ENCODE measurements at regions of chr7 and their contacts with region 1.

Region 1: GRCh38 chr7:142811154-142811737 is 40.5 kb downstream of the PRSS2 start:
- DNase-seq: peak; percentile 59
- H3K4me3 ChIP-seq: no peak overlapping the region; a peak in 1 of 4 replicates
- H3K27ac ChIP-seq: no peak overlapping the region
- H3K4me1 ChIP-seq: peaks cover 27 to 33% of the 10 kb centered on the region in 2 experiments
- H3K27me3 ChIP-seq: peaks cover 10% of the 10 kb centered on the region; the same call in 1 of the 2 replicates
- CTCF ChIP-seq: peak; percentile 89
- EP300 ChIP-seq: no peak
- RAD21 ChIP-seq: peak; percentile 76

Region 2: GRCh38 chr7:142345811-142346210 is 465.4 kb before region 1 on chr7:
- CTCF ChIA-PET with region 1: no interaction called
- POLR2A ChIA-PET with region 1: no interaction called
- DNase-seq: no peak
- H3K4me3 ChIP-seq: no peak overlapping the region
- H3K27ac ChIP-seq: no peak overlapping the region
- H3K4me1 ChIP-seq: no peaks in the 10 kb centered on the region
- H3K27me3 ChIP-seq: peaks cover 65% of the 10 kb centered on the region
- CTCF ChIP-seq: no peak
- EP300 ChIP-seq: no peak
- RAD21 ChIP-seq: no peak

Region 3: GRCh38 chr7:142496545-142497041 is 314.7 kb before region 1 on chr7:
- CTCF ChIA-PET with region 1: interaction called, 18 read pairs
- POLR2A ChIA-PET with region 1: no interaction called
- DNase-seq: peak; percentile 67
- H3K4me3 ChIP-seq: no peak overlapping the region
- H3K27ac ChIP-seq: no peak overlapping the region
- H3K4me1 ChIP-seq: peaks cover 0 to 3% of the 10 kb centered on the region in 2 experiments; a peak in 1 of 4 replicates
- H3K27me3 ChIP-seq: peaks cover 21% of the 10 kb centered on the region; the same call in 1 of the 2 replicates
- CTCF ChIP-seq: peak; percentile 95
- EP300 ChIP-seq: no peak
- RAD21 ChIP-seq: peak; percentile 69

Region 4: DNA sequence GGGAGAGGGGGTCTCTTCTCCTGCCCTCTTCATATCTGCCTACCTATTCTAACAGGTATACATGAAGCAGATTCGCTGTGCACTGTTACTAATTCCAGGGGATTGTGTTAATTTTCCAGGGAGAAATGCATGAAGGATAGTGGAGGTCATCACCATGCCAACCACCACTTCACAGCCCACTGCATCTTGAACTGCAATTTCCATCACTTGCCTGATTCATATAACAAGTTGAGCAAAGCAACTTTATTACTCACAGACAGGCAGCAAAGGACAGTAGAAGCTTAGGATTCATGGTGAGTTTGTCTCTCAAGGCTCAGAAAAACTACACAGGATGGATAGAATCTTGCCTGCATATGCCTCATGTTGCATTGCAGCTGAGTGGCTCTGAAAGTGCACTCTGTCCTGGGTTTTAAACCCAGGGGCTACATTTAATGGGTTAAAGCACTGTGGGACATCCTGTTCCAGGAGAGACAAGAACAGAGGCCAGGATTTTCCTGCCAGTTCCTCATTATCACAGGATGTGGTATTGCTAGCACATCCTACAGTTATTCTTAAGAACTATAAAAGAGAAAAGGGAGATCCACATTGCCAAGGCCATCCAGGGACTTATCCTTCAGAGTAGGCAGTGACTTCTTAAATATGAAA is 198.9 kb before region 1 on chr7:
- CTCF ChIA-PET with region 1: interaction called, 20 read pairs
- POLR2A ChIA-PET with region 1: no interaction called
- DNase-seq: peak; percentile 63
- H3K4me3 ChIP-seq: no peak overlapping the region
- H3K27ac ChIP-seq: peak overlapping the region in 1 of 2 experiments; percentile 98; a peak in 3 of 4 replicates
- H3K4me1 ChIP-seq: peaks cover 0 to 17% of the 10 kb centered on the region in 2 experiments; a peak in 2 of 4 replicates
- H3K27me3 ChIP-seq: no peaks in the 10 kb centered on the region; the same call in 1 of the 2 replicates
- CTCF ChIP-seq: no peak
- EP300 ChIP-seq: peak; percentile 23 to 68; a peak in 2 of 4 replicates
- RAD21 ChIP-seq: no peak

Region 5: GRCh38 chr7:142739923-142740492 is 71.2 kb before region 1 on chr7:
- CTCF ChIA-PET with region 1: no interaction called
- POLR2A ChIA-PET with region 1: no interaction called
- DNase-seq: no peak
- H3K4me3 ChIP-seq: no peak overlapping the region
- H3K27ac ChIP-seq: no peak overlapping the region
- H3K4me1 ChIP-seq: no peaks in the 10 kb centered on the region
- H3K27me3 ChIP-seq: 0 out of 2 replicates have a peak, but pooled peaks cover 23% of the 10 kb centered on the region
- CTCF ChIP-seq: peak; percentile 16; the same call in 1 of the 2 replicates
- EP300 ChIP-seq: no peak
- RAD21 ChIP-seq: no peak

Region 6: GRCh38 chr7:142796608-142797385 is 14.4 kb before region 1 on chr7:
- CTCF ChIA-PET with region 1: interaction called, 163 read pairs
- POLR2A ChIA-PET with region 1: no interaction called
- DNase-seq: peak; percentile 75
- H3K4me3 ChIP-seq: peak overlapping the region in 1 of 2 experiments; percentile 28; a peak in 1 of 4 replicates
- H3K27ac ChIP-seq: no peak overlapping the region
- H3K4me1 ChIP-seq: peaks cover 0 to 9% of the 10 kb centered on the region in 2 experiments; a peak in 1 of 4 replicates
- H3K27me3 ChIP-seq: peaks cover 61% of the 10 kb centered on the region
- CTCF ChIP-seq: no peak
- EP300 ChIP-seq: no peak
- RAD21 ChIP-seq: no peak

Region 7: DNA sequence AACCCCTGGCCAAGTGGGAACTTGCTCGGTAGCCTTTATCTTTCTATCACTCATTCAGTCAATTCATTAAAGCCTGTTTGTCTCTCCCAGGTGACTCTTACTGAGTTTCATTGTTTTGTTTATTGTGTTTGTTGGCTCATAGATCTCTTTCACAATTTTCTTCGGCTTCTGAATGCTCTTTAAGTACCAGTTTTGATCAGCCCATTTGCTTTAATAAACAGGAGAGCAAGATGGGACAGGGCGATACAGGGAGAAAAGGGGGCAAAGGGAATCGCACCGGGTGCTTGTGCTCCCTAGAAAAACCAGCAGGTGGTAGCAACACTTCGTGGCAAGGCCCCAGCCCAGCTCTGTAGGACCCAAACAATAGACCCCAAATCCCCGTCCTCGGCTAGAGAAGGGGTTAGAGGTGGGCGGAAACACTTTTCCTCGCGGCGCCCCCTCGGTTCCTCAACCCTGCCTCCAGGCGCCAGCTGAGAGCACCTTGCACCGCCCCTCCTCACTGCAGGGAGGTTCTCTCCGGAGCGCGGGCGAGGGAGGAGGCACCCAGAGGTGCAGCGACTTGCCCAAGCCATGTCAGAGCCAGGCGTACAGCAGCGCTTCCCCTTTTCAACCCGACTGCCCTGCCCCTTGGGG is 42.6 kb after region 1 on chr7:
- CTCF ChIA-PET with region 1: interaction called, 14 read pairs
- POLR2A ChIA-PET with region 1: no interaction called
- DNase-seq: peak; percentile 92
- H3K4me3 ChIP-seq: peak overlapping the region; percentile 61 to 89
- H3K27ac ChIP-seq: no peak overlapping the region; a peak in 1 of 4 replicates
- H3K4me1 ChIP-seq: peaks cover 0 to 14% of the 10 kb centered on the region in 2 experiments; a peak in 1 of 4 replicates
- H3K27me3 ChIP-seq: peaks cover 42% of the 10 kb centered on the region; the same call in 1 of the 2 replicates
- CTCF ChIP-seq: peak; percentile 96
- EP300 ChIP-seq: no peak
- RAD21 ChIP-seq: peak; percentile 81

Region 8: GRCh38 chr7:143049362-143049761 is 238.1 kb after region 1 on chr7:
- CTCF ChIA-PET with region 1: no interaction called
- POLR2A ChIA-PET with region 1: no interaction called
- DNase-seq: no peak
- H3K4me3 ChIP-seq: no peak overlapping the region
- H3K27ac ChIP-seq: no peak overlapping the region
- H3K4me1 ChIP-seq: no peaks in the 10 kb centered on the region
- H3K27me3 ChIP-seq: no peaks in the 10 kb centered on the region
- CTCF ChIP-seq: no peak
- EP300 ChIP-seq: no peak
- RAD21 ChIP-seq: no peak